GM12878 (cell line): ENCODE measurements at regions of chr11 and their contacts with region 1.

Region 1: DNA sequence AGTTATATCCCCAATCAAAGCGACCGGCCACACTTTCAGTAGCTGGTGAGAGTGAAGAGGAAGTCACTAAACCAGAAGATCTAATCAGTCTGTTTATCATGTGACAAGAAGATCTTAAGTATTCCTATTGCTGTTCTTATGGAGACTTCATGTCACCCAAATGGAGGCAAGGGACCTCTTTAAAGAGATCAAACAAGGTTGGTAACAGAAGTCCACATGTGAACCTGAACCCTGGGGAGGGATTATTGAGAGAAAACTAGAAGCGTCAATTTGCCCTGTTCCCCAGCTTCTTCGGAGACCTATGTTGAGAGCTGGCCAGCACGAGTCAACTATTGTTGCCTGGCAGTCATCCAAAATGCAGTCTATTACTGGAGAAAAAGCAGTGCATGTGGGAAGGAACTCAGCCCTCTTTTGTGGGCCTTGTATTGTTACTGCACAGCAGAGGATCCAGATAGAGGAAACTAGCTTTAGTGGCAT is 76.9 kb upstream of the CTSC start:
- DNase-seq: no peak
- ATAC-seq: no peak
- H3K4me3 ChIP-seq: no peak overlapping the region
- H3K27ac ChIP-seq: peak overlapping the region; percentile 50
- H3K4me1 ChIP-seq: peaks cover 17% of the 10 kb centered on the region
- H3K27me3 ChIP-seq: no peaks in the 10 kb centered on the region
- CTCF ChIP-seq: no peak
- EP300 ChIP-seq: no peak
- POLR2A ChIP-seq: no peak
- RAD21 ChIP-seq: no peak

Region 2: GRCh38 chr11:88375927-88376470 is 38.4 kb before region 1 on chr11:
- CTCF ChIA-PET with region 1: no interaction called
- POLR2A ChIA-PET with region 1: interaction called, 11 read pairs
- RAD21 ChIA-PET with region 1: no interaction called
- SMC1A ChIA-PET with region 1: interaction called, 4 read pairs
- in situ Hi-C with region 1: no loop called
- intact Hi-C with region 1: no loop called
- DNase-seq: no peak
- ATAC-seq: no peak
- H3K4me3 ChIP-seq: no peak overlapping the region
- H3K27ac ChIP-seq: no peak overlapping the region
- H3K4me1 ChIP-seq: no peaks in the 10 kb centered on the region
- H3K27me3 ChIP-seq: no peaks in the 10 kb centered on the region
- CTCF ChIP-seq: no peak
- EP300 ChIP-seq: no peak
- POLR2A ChIP-seq: no peak
- RAD21 ChIP-seq: no peak